ENCODE measurements at regions of chrX and their contacts with region 1.

Region 1: GRCh38 chrX:49163555-49164419 is 1.2 kb downstream of the MAGIX start:
- DNase-seq: peak; percentile 87 to 95
- ATAC-seq: peak; percentile 64 to 73 (median 70)
- H3K4me3 ChIP-seq: peak overlapping the region; percentile 59
- H3K27ac ChIP-seq: peak overlapping the region; percentile 93
- H3K4me1 ChIP-seq: no peaks in the 10 kb centered on the region
- H3K27me3 ChIP-seq: no peaks in the 10 kb centered on the region
- CTCF ChIP-seq: peak; percentile 77

Region 2: DNA sequence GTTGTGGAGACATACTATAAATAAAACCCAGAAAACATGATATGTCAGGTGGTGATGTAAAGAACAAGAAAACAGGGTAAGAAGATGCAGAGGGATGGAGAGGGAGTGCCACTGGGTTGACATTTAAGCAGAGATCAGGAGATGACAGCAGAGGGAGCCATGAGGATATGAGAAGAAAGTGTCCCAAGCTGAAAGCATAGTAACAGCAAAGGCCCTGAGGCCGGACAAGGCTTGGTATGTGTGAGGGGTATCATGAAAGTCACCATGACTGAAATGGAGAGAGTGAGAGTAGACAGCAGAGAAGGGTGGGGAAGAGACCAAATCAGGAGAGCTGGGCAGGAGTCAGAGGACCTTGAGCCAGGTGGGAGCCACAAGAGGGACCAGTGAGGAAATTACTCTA is 43.7 kb before region 1 on chrX:
- intact Hi-C with region 1: loop called in 1 of 2 experiments (anchors 5 kb)
- DNase-seq: no peak
- ATAC-seq: no peak
- H3K4me3 ChIP-seq: no peak overlapping the region
- H3K27ac ChIP-seq: no peak overlapping the region
- H3K4me1 ChIP-seq: peaks cover 5% of the 10 kb centered on the region
- H3K27me3 ChIP-seq: no peaks in the 10 kb centered on the region
- CTCF ChIP-seq: no peak

Region 3: DNA sequence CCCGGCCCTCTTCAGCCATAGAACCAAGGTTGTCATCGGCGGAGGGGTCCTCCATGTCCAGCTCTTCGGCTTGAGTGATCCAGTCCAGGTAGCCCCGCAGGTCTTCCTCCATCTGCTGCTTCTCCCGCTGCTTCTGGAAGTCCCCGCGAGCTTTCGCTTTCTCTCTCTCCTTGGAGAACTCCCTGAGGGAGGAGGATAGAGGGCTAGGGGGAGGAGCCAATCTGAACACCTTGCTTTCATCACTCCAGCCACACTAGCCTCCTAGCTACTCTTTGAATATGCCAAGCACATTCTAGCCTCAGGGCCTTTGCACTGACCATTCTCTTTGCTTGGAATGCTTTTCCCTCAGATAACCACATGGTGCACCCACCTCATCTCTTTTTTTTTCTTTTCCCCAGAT is 63.2 kb after region 1 on chrX:
- intact Hi-C with region 1: no loop called
- DNase-seq: no peak
- ATAC-seq: no peak
- H3K4me3 ChIP-seq: no peak overlapping the region
- H3K27ac ChIP-seq: no peak overlapping the region
- H3K4me1 ChIP-seq: no peaks in the 10 kb centered on the region
- H3K27me3 ChIP-seq: peaks cover 0 to 17% (median 3%) of the 10 kb centered on the region in 3 donors
- CTCF ChIP-seq: no peak

Measured in psoas muscle (tissue), 8 donors.